H1 (cell line): ENCODE measurements at regions of chr20 and their contacts with region 1.

Region 1: GRCh38 chr20:46343348-46343974 is 35.2 kb upstream of the CDH22 start:
- DNase-seq: no peak
- H3K4me3 ChIP-seq: no peak overlapping the region
- H3K27ac ChIP-seq: no peak overlapping the region
- H3K4me1 ChIP-seq: peaks cover 0 to 12% (median 5%) of the 10 kb centered on the region in 4 experiments; a peak in 6 of 7 replicates
- H3K27me3 ChIP-seq: peaks cover 0 to 15% (median 11%) of the 10 kb centered on the region in 4 experiments; a peak in 5 of 7 replicates
- CTCF ChIP-seq: no peak
- EP300 ChIP-seq: no peak
- POLR2A ChIP-seq: no peak
- RAD21 ChIP-seq: no peak

Region 2: DNA sequence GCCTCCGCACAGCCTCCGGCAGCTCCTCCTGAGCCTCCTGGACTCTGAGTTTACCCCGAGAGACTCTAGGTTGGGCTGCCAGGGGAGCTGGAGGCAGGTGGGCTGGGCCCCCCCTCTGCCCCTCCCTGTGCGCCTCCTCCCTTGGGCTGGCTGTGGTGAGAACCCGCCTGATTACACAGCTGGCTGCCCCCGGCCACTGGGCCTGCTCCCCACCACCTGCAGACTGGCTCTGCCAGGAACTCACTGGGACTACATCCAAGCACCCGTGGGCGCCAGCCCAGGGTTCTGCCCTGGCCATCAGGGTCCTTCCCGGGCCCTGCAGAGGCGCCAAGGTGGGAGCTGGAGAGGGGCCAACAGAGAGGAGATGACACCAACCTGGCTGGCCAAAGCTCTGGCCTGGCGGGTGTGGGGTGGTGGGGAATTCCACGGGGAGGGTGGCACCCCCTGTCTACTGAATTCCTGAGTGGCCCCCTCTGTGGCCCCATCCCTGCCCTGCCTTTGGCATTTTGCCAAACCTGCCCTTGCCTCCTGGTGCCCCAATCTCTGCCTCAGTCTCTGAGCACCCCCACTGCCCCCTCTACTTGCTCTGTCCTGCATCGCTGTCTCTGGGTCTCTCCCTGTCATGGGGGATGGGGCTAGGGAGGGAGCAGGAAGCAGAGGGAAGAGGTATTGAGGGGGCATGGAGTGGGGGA is 13.2 kb before region 1 on chr20:
- CTCF ChIA-PET with region 1: interaction called, 214 read pairs
- POLR2A ChIA-PET with region 1: interaction called, 10 read pairs
- DNase-seq: no peak
- H3K4me3 ChIP-seq: no peak overlapping the region
- H3K27ac ChIP-seq: no peak overlapping the region
- H3K4me1 ChIP-seq: peaks cover 0 to 27% (median 9%) of the 10 kb centered on the region in 4 experiments; a peak in 6 of 7 replicates
- H3K27me3 ChIP-seq: peaks cover 0 to 3% (median 0%) of the 10 kb centered on the region in 4 experiments; a peak in 2 of 7 replicates
- CTCF ChIP-seq: no peak
- EP300 ChIP-seq: no peak
- POLR2A ChIP-seq: no peak
- RAD21 ChIP-seq: no peak

Region 3: DNA sequence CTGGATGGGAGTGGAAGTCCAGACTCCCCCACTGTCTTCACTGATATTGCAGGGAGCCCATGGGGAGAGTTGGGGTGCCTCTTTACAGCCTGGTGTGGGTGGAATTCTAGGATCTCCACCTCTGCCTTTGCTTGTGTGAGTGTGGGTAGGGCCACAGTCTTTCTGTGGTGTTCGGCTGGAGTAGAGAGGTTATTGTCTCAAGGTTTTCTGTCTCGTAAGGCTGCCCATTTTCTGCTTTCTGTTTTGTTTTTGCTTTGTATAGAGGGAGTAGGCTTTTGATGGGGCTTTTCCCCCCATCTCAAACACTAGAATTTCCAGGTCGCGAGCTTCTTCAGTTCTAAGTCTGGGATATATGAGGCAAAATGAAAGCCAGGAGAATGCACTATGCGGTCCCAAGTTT is 103.4 kb after region 1 on chr20:
- CTCF ChIA-PET with region 1: no interaction called
- POLR2A ChIA-PET with region 1: no interaction called
- DNase-seq: no peak
- H3K4me3 ChIP-seq: no peak overlapping the region
- H3K27ac ChIP-seq: no peak overlapping the region
- H3K4me1 ChIP-seq: no peaks in the 10 kb centered on the region
- H3K27me3 ChIP-seq: no peaks in the 10 kb centered on the region
- CTCF ChIP-seq: no peak
- EP300 ChIP-seq: no peak
- POLR2A ChIP-seq: no peak
- RAD21 ChIP-seq: no peak

Region 4: GRCh38 chr20:46485431-46485830 is 142.0 kb after region 1 on chr20:
- CTCF ChIA-PET with region 1: no interaction called
- POLR2A ChIA-PET with region 1: no interaction called
- DNase-seq: no peak
- H3K4me3 ChIP-seq: peak overlapping the region in 1 of 4 experiments; percentile 1; a peak in 1 of 8 replicates
- H3K27ac ChIP-seq: no peak overlapping the region
- H3K4me1 ChIP-seq: peaks cover 0 to 3% (median 0%) of the 10 kb centered on the region in 4 experiments; a peak in 2 of 7 replicates
- H3K27me3 ChIP-seq: no peaks in the 10 kb centered on the region
- CTCF ChIP-seq: no peak
- EP300 ChIP-seq: no peak
- POLR2A ChIP-seq: no peak
- RAD21 ChIP-seq: no peak